Vagina (tissue), 2 donors: ENCODE measurements at regions of chr19 and their contacts with region 1.

Region 1: DNA sequence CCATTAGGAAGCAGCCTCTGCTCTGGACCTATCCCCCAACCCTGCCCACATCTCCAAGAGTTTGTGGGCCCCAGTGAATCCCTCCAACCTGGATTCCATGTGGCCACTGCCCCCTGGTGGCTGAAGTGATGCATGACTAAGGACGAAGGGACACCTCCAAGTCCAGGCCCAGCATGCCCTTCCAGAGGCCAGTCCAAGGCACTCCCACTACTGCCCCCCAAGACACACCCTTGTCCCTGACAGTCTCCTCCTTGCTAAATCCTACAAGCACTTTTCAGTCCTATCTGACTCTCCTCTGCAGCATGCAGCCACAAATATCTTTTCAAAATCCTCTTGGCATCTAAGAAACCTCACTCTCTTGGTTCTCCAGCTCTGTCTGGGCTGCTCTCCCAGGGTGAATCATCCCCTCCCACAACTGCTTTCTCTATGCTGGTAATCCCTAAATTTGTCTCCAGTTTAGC is 33.0 kb downstream of the DEDD2 start:
- DNase-seq: no peak
- H3K4me3 ChIP-seq: no peak overlapping the region
- H3K27ac ChIP-seq: no peak overlapping the region
- H3K4me1 ChIP-seq: no peaks in the 10 kb centered on the region
- H3K27me3 ChIP-seq: peaks cover under 1% of the 10 kb centered on the region
- CTCF ChIP-seq: peak; percentile 67 to 79 (median 75)
- POLR2A ChIP-seq: no peak

Region 2: DNA sequence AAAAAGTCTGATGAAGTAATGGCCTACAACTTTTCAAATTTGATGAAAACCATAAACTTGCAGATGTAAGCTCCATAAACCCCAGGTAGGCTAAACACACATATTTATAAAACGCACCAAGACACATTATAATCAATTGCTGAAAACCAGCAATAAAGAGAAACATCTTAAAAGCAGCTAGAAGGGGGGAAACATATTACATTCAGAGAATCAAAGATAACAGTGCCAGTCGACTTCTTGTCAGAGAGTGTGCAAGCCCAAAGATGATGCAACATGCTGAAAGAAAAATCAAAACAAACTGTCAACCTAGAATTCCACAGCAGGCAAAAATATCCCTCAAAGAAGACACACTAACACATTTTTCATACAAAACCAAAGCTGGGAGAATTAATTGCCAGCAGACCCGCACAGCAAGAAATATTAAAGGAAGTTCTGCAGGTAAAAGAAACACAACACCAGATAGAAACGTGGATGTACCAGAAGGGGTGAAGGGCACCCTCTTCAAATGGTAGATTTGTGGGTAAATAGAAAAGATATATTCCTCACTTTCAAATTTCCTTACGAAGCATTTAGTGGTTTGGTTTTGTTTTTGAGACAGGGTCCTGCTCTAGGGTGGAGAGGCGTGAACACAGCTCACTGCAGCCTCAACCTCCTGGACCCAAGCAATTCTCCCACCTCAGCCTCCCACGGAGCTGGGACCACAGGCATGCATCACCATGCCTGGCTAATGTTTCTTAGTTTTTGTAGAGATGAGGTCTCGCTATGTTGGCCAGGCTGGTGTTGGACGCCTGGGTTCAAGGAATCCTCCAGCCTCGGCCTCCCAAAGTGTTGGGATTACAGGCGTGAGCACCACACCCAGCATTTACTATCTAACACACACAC is 173.9 kb before region 1 on chr19:
- intact Hi-C with region 1: no loop called
- DNase-seq: no peak
- H3K4me3 ChIP-seq: no peak overlapping the region
- H3K27ac ChIP-seq: no peak overlapping the region
- H3K4me1 ChIP-seq: no peaks in the 10 kb centered on the region
- H3K27me3 ChIP-seq: no peaks in the 10 kb centered on the region
- CTCF ChIP-seq: no peak
- POLR2A ChIP-seq: no peak

Region 3: GRCh38 chr19:42095814-42096230 is 88.6 kb before region 1 on chr19:
- intact Hi-C with region 1: no loop called
- DNase-seq: no peak
- H3K4me3 ChIP-seq: peak overlapping the region; percentile 21 to 39
- H3K27ac ChIP-seq: no peak overlapping the region
- H3K4me1 ChIP-seq: peaks cover 14% of the 10 kb centered on the region
- H3K27me3 ChIP-seq: no peaks in the 10 kb centered on the region
- CTCF ChIP-seq: no peak
- POLR2A ChIP-seq: no peak

Region 4: DNA sequence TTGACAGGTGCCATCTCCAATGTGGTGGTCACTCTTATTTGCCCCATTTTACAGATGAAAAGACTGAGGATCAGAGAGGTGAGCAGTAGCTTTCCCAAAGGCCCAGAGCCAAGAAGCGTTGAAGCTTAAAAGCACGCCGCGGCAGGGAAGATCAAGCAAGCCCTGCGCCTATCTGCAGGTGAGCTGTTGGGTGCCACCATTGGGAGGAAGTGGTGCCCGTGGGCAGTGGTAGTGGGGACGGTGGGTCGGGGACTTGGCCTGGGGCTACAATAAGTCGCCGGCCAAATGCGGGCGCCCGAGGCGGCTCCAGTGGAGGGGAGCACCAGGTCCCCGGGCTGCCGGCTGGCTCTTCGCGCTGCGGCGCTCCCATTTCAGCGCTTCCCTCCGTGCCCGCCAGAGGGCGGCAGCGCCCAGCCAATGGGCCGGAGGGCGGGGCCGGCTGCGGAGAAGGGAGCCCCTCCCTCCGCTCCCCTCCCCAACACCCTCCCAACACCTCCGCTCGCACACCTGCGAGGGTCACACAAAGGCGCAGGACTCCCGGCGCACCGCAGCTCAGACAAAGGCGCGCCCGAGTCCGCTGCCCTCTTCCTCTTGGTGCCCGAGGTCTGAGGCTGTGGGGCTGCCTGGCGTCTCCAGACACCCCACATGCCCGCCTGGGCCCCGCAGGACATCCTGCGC is 51.4 kb before region 1 on chr19:
- intact Hi-C with region 1: loop called (anchors 5 kb)
- DNase-seq: no peak
- H3K4me3 ChIP-seq: peak overlapping the region; percentile 20 to 25
- H3K27ac ChIP-seq: no peak overlapping the region
- H3K4me1 ChIP-seq: peaks cover 14% of the 10 kb centered on the region
- H3K27me3 ChIP-seq: no peaks in the 10 kb centered on the region
- CTCF ChIP-seq: peak; percentile 82 to 95 (median 86)
- POLR2A ChIP-seq: no peak